Colonic mucosa (tissue), 4 donors: ENCODE measurements at regions of chr2 and their contacts with region 1.

Region 1: GRCh38 chr2:113756355-113757137 is at the start of gene SLC35F5:
- DNase-seq: peak; percentile 94
- H3K4me3 ChIP-seq: peak within 1 kb of the TSS; percentile 98
- H3K27ac ChIP-seq: peak within 1 kb of the TSS; percentile 99
- H3K4me1 ChIP-seq: no peaks in the 10 kb centered on the region
- H3K27me3 ChIP-seq: no peaks in the 10 kb centered on the region
- CTCF ChIP-seq: no peak
- total RNA-seq, gene SLC35F5: 85.1 to 121 TPM

Region 2: DNA sequence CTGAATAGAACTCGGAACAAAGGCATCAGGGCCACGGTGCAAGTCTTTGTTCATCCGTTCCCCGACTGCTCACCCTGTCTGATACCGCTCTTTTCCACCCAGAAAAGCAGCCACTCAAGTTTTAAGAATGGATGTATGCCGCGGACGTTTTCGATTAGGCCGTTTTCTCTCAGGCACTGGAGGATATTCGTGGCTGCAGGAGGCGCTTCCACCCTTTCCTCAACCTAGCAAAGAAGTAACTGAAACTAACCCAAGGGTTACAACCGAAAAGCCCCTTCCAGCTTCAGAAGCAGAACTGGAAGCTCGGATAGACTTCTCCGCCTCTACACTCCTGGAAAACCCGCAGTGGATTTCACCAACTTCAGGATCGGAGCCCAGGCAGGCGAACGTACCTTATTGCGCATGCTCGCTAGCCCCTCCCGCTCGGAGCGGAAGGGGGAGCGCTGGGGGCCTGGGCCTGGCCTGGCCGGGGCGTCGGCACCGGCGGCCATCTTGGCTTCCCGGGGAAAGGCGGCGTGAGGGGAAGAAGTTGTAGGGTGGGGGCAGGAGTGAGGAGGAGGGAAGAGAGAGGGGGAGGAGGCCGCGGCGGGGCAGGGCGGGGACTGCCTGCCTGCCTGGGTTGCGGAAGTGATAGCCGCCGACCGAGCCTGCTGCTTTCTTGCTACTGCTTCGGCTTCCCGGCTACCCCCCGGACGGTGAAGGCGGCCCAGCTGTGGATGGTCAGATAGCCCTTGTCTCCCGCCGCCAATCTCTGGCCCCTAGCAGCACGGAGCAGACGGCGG is 133.1 kb after region 1 on chr2 and contains the start of gene ACTR3:
- intact Hi-C with region 1: loop called (anchors 10 kb)
- DNase-seq: peak; percentile 99
- H3K4me3 ChIP-seq: peak within 1 kb of the TSS; percentile 96
- H3K27ac ChIP-seq: peak within 1 kb of the TSS; percentile 100
- H3K4me1 ChIP-seq: peaks cover 20% of the 10 kb centered on the region
- H3K27me3 ChIP-seq: no peaks in the 10 kb centered on the region
- CTCF ChIP-seq: no peak
- total RNA-seq, gene ACTR3: 317 to 342 TPM